Endothelial cell of umbilical vein (primary cell): ENCODE measurements at regions of chr21 and their contacts with region 1.

Region 1: GRCh38 chr21:17679002-17679600 is 66.4 kb upstream of the BTG3 start:
- DNase-seq: peak; percentile 61
- H3K4me3 ChIP-seq: no peak overlapping the region
- H3K27ac ChIP-seq: no peak overlapping the region
- H3K4me1 ChIP-seq: no peaks in the 10 kb centered on the region
- H3K27me3 ChIP-seq: no peaks in the 10 kb centered on the region
- CTCF ChIP-seq: peak; percentile 55 to 57
- POLR2A ChIP-seq: no peak

Region 2: DNA sequence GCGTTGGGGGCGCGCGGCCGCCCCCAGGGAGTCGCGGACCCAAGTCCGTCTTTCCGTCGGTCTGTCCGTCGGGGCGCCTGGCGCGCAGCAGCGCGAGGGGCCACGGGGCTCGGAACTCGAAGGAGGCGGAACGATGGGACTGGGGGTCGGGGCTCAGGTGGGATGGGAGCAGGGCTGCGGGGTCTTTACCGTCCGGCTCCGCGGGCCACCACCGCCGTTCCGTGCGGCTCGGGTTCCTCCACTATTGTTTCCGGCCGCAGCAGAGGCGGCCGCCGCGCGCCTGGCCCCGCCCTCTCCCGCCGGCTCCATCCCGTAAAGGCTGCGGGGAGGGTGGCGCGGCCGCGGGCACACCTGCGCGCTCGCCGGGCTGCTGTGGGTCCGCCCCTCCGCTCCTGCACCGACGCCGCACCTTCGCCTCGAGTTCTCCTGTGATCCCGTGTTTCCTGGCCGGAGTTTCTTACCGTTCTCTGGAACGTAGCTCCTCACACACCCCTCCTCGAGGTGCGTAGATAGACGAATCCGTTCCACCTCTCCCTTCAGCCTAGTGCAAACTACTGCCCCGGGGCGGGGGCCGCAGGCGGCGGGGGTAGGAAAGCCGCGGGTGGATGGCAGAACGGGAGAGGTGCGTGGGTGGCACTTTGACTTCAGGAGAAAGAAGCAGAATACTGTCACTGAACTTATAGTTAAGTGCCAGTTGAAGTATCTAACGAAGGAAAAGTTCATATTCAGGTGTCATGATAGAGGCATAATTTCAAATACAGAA is 140.2 kb after region 1 on chr21 and contains the start of gene C21orf91:
- CTCF ChIA-PET with region 1: no interaction called
- POLR2A ChIA-PET with region 1: no interaction called
- dilution Hi-C with region 1: no loop called
- intact Hi-C with region 1: loop called (anchors 5 kb)
- DNase-seq: peak; percentile 86
- H3K4me3 ChIP-seq: peak within 1 kb of the TSS; percentile 56 to 82 (median 72)
- H3K27ac ChIP-seq: peak within 1 kb of the TSS; percentile 75
- H3K4me1 ChIP-seq: peaks cover 10% of the 10 kb centered on the region
- H3K27me3 ChIP-seq: peaks cover 0 to 3% of the 10 kb centered on the region in 2 experiments
- CTCF ChIP-seq: no peak
- POLR2A ChIP-seq: peak; percentile 85
- total RNA-seq, gene C21orf91: 4.2 and 5.4 TPM in 2 replicates